Right ventricle myocardium inferior (tissue), 1 donor: ENCODE measurements at regions of chr16 and their contacts with region 1.

Region 1: GRCh38 chr16:83441517-83441916 is 366.3 kb upstream of the HSBP1 start:
- DNase-seq: no peak
- ATAC-seq: no peak

Region 2: DNA sequence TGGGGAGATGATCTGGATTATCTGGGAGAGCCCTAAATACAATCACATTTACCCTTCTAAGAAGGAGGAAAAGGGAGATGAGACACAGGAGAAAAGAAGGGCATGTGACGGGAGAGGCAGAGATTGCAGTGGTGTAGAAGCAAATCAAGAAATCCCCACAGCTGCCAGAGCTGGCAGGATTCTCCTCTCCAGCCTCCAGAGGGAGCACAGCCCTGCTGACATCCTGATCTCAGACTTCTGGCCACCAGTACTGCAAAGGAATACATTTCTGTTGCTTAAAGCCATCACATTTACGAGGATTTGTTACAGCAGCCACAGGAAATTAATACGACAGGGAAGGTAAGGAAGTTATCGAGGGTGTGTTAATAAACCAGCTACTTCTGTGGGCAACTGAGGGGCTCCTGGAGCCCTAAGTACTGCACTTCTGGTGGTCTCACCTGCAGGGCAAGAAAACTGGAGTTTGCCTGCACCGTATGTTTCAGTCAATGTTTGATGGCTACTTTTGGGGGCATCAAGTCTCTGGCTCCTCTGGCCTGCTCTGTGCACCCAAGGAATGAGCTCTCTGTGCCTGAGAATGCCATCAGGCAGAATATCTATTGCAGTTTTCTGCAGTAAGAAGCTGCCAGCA is 837.6 kb before region 1 on chr16:
- intact Hi-C with region 1: loop called (anchors 10 kb)
- DNase-seq: no peak
- ATAC-seq: peak; percentile 82

Region 3: GRCh38 chr16:83200005-83200779 is 241.3 kb before region 1 on chr16:
- intact Hi-C with region 1: loop called (anchors 10 kb)
- DNase-seq: no peak
- ATAC-seq: peak; percentile 55

Region 4: DNA sequence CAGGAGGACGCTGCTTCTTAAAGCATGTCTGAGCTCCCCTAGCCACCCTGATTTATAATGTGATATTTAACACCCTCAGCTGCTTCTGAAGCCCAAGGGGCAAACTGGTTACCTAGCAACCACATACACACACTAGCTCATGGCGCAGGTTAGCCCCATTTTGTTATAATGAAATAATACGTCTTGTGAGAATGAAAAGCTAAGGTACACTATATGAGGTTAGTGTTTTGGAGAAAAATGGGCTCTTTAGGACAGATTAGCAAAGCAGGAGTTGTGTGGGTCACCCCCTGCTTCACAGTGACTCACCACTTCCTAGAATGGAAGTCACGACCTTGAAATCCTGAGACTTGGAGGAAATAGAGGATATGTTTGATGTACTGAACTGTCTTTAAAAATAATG is 38.5 kb before region 1 on chr16:
- intact Hi-C with region 1: no loop called
- DNase-seq: no peak
- ATAC-seq: no peak